Left cardiac atrium (tissue), 4 donors: ENCODE measurements at regions of chr9 and their contacts with region 1.

Region 1: DNA sequence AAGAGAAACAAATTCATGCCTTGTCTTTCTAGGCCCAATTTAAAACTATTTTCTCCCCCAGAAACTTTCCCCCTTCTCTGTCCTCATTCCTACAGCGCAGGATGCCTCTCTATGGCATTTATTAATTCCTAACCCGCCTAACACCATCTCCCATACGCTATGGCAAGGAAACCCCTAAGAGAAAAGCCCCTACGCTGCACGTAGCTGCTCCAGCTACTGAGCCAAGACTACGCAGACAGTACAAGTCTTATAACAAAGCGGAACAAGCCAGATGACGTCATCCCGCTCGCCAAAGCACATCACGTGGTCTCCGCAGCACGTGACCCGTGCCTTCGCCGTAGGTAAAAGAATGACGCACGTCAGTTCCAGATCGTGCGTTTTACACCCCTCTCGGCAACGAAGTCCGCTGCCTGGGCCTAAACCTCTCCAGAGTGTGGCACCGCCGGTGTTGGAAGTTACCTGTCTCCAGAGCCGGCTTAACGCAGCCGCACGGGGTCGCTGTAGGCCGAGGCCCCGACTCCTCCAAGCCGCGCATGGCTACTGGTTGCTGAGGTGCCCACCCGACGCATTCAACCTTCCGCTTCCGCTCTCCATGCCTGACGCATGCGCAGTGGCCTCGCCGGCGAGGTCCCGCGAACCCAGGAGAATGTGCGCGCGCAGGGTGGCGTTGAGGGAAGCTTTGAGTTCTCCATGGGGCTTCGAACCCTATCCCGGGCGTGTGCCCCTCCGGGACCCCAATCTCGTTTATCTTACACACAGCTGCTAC is at the start of gene TRMO:
- DNase-seq: peak; percentile 99
- ATAC-seq: peak; percentile 95 to 96
- total RNA-seq, gene TRMO: 7.0 to 8.2 TPM

Region 2: GRCh38 chr9:97982683-97983588 is 60.8 kb after region 1 on chr9 and contains the start of gene ANP32B:
- intact Hi-C with region 1: loop called in 1 of 2 experiments (anchors 2 kb)
- DNase-seq: peak; percentile 93
- ATAC-seq: peak; percentile 91 to 95
- total RNA-seq, gene ANP32B: 55.2 to 70.2 TPM

Region 3: DNA sequence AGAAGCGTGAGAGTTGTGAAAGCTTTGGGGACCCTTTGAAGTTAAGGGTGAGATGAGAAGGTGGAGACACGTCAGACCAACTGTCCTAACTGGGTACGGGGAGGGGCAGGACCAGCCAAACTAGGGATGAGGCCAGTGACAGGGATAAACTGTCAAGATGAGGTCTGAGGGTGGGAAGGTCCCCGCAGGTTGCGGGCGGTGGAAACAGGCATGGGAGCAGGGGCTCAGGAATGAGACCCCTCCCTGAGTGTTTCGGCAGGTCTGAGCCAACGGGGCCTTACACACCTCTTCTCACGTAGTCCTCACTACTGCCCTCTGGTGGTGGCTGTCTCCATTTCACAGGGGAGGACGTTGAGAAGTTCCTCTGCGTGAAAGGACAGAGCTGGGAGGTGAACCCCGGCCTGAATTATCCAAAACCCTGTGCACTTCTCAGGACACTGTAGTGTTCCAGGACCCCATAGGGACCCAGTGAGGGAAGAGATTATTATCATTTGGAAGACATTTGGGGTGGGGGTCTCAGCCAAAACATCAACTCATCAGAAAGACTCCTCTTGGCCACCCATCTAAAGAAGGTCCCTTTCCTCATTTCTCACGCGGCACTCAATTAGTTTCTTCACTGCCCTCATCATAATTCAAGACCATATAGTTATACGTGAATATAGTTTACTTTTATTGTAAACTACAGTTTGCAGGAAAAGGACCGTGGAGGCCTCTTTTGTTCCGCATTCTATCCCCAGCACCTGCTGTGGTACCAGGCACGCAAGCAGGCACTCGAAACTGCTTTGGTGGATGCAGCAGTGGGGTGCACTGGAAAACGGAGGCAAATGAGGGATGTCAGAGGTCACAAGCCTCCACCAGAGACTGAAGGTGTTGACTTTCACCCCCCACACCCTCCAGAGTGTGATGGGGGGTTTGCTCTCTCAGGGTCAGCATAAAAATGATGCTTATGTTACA is 112.7 kb after region 1 on chr9:
- intact Hi-C with region 1: loop called (anchors 2 to 5 kb)
- DNase-seq: peak; percentile 89
- ATAC-seq: peak; percentile 80 to 89

Region 4: DNA sequence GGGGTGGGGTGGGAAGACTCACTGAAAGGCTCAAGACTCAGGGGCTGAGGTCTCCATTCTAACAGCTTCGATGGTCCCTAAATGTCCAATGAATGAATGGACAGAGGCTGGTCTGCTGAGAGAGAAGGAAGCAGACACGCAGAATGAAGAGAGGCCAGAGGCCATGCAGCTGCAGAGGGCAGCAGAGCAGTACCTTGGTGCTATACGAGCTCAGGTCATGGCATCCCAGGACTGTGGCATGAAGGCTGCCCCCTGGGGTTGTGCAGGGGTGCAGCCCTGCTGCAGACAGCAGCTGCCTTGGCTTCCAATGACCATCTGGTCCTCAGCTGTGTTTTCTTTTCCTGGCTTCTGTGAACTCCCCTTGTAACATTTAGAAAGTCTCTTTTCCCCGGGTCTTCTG is 285.5 kb after region 1 on chr9:
- intact Hi-C with region 1: loop called in 1 of 2 experiments (anchors 10 kb)
- DNase-seq: no peak
- ATAC-seq: no peak

Region 5: DNA sequence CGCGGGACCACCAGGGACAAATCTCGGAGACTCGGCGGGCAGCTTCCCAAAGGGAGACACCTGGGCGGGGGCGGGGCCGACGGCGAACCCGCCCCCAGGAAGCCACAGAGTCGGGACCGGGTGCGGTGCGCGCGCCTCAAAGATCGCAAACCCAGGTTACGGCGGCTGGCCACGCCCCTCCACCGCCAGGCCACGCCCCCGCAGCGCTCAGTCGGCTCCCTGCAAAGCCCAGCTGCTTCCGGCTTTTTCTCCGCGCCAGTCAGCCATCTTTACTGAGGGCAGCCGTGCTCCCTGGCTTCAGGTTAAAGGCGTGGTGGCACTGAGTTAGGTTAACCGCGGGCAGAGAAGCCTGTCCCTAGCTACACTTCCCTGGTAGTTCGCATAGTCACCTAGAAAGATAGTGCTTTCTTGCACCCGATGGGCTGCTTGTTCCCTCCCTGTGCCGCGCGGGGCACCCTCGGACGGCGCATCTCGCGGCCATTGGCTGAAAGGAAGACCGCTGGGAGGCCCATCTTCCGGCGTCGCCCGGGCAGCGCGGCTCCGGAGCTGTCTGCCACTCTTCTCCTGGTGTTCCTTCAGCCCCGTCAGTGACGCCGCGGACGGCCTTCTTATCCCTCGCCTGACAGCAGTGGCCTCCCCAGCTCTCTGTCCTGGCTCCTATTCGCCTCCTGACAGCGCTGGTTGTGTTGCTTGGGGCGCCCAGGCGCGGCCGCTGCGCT is 333.6 kb after region 1 on chr9 and contains the start of gene TBC1D2:
- intact Hi-C with region 1: loop called in 1 of 2 experiments (anchors 5 kb)
- DNase-seq: peak; percentile 94
- ATAC-seq: peak; percentile 97 to 98
- total RNA-seq, gene TBC1D2: 4.4 to 5.3 TPM

Region 6: GRCh38 chr9:98263482-98264357 is 341.6 kb after region 1 on chr9:
- intact Hi-C with region 1: loop called (anchors 2 to 5 kb)
- DNase-seq: peak; percentile 78
- ATAC-seq: peak; percentile 94 to 96